ENCODE measurements at regions of chr9 and their contacts with region 1.

Region 1: GRCh38 chr9:105244003-105244733 is at the start of gene SLC44A1:
- DNase-seq: peak; percentile 92 to 94 (median 93)
- H3K4me3 ChIP-seq: peak within 1 kb of the TSS; percentile 18 to 71
- H3K4me3 Mint-ChIP-seq: peak within 1 kb of the TSS; percentile 89 to 95 (median 92)
- H3K27ac ChIP-seq: peak within 1 kb of the TSS; percentile 67
- H3K27ac Mint-ChIP-seq: peak within 1 kb of the TSS; percentile 89 to 96 (median 92)
- H3K4me1 ChIP-seq: peaks cover 20% of the 10 kb centered on the region
- H3K4me1 Mint-ChIP-seq: peaks cover 8 to 49% (median 20%) of the 10 kb centered on the region in 4 donors
- H3K27me3 ChIP-seq: no peaks in the 10 kb centered on the region
- H3K27me3 Mint-ChIP-seq: peaks cover 4% of the 10 kb centered on the region in 2 donors
- total RNA-seq, gene SLC44A1: 13.7 to 15.2 TPM

Region 2: DNA sequence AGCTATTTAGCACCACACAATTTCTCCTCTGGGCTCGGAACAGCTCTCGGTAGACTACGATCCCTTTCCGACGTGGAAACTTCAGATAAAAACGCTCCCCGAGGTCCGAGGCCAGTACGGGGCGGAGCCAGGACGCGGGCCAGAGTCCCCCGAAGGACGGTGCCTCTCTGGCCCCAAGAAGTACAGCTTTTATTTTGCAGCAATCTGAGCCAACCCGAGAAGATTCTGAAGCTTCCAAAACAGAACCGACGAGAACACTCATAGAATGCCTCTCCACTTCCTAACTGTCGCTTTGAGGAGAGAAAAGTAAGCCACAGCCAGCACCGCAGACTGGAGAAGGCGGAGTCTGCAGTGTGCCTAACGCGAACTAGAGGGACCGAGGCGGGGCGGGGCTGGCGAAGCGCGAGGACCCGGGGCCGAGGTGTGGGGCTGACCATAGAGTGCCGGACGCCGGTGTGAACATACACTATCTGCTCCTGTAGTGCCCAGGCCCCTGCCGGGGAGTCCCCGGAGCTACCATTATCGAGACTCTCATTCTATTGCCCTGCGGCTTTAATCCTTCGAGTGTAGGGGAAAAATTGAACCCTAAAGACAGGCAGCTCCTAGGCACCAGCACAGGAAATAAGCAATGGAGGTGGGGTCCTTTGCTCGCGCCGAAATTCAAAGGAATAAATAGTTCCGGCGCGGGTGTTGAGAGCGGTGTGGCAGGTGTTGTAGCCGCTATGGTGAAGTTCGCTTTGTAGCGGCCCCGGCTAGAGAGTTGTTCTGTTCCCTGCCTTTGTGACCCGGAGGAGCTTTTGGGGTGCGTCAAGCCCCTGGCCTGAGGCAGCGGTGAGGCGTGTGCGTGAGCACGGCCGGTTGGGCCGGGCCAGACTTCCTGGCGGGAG is 1150.3 kb before region 1 on chr9 and contains the start of gene SMC2:
- CTCF ChIA-PET with region 1: no interaction called
- POLR2A ChIA-PET with region 1: interaction called, 10 read pairs
- intact Hi-C with region 1: no loop called
- DNase-seq: peak; percentile 93 to 96 (median 95)
- H3K4me3 ChIP-seq: peak within 1 kb of the TSS; percentile 63 to 90
- H3K4me3 Mint-ChIP-seq: peak within 1 kb of the TSS; percentile 98 to 100 (median 99)
- H3K27ac ChIP-seq: peak within 1 kb of the TSS; percentile 79
- H3K27ac Mint-ChIP-seq: peak within 1 kb of the TSS; percentile 99 to 100 (median 99)
- H3K4me1 ChIP-seq: peaks cover 30% of the 10 kb centered on the region
- H3K4me1 Mint-ChIP-seq: peaks cover 26 to 46% (median 30%) of the 10 kb centered on the region in 4 donors
- H3K27me3 ChIP-seq: no peaks in the 10 kb centered on the region
- H3K27me3 Mint-ChIP-seq: peaks cover 0 to 3% of the 10 kb centered on the region in 2 donors
- total RNA-seq, gene SMC2: 9.7 to 10.4 TPM

Region 3: GRCh38 chr9:104765138-104765537 is 479.0 kb before region 1 on chr9:
- CTCF ChIA-PET with region 1: no interaction called
- POLR2A ChIA-PET with region 1: interaction called, 3 read pairs
- intact Hi-C with region 1: loop called (anchors 5 kb)
- DNase-seq: no peak
- H3K4me3 ChIP-seq: no peak overlapping the region
- H3K4me3 Mint-ChIP-seq: peak overlapping the region; percentile 91 to 97 (median 94)
- H3K27ac ChIP-seq: no peak overlapping the region
- H3K27ac Mint-ChIP-seq: peak overlapping the region in 2 of 7 donors; percentile 13 to 30
- H3K4me1 ChIP-seq: peaks cover 6% of the 10 kb centered on the region
- H3K4me1 Mint-ChIP-seq: peaks cover 5 to 9% (median 6%) of the 10 kb centered on the region in 4 donors
- H3K27me3 ChIP-seq: no peaks in the 10 kb centered on the region
- H3K27me3 Mint-ChIP-seq: no peaks in the 10 kb centered on the region

Region 4: GRCh38 chr9:104968025-104968982 is 275.9 kb before region 1 on chr9:
- CTCF ChIA-PET with region 1: no interaction called
- POLR2A ChIA-PET with region 1: interaction called, 4 read pairs
- intact Hi-C with region 1: loop called (anchors 1 kb)
- DNase-seq: peak; percentile 87 to 91 (median 89)
- H3K4me3 ChIP-seq: peak overlapping the region; percentile 78 to 88
- H3K4me3 Mint-ChIP-seq: peak overlapping the region; percentile 89 to 96 (median 94)
- H3K27ac ChIP-seq: peak overlapping the region; percentile 58
- H3K27ac Mint-ChIP-seq: peak overlapping the region; percentile 73 to 95 (median 90)
- H3K4me1 ChIP-seq: peaks cover 14% of the 10 kb centered on the region
- H3K4me1 Mint-ChIP-seq: peaks cover 2 to 17% (median 11%) of the 10 kb centered on the region in 4 donors
- H3K27me3 ChIP-seq: no peaks in the 10 kb centered on the region
- H3K27me3 Mint-ChIP-seq: peaks cover 6 to 13% of the 10 kb centered on the region in 2 donors

Region 5: DNA sequence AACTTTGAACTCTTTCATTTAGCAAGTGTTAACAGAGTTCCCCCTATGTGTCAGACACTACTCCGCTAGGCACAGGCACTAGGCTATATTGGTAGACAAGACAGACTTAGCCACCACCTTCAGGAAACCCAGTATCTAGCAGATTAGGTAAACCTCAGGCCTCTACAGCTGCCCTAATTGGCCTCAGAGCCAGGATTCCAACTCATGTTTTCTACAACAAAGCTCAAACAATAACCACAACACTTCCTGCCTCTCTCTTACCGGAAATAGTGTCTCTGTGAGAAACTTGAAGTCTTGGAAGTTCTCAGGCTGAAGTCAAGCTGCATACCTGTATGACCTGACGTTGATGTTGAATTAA is 116.3 kb before region 1 on chr9:
- CTCF ChIA-PET with region 1: no interaction called
- POLR2A ChIA-PET with region 1: interaction called, 13 read pairs
- intact Hi-C with region 1: loop called (anchors 2 kb)
- DNase-seq: peak; percentile 84 to 91 (median 89)
- H3K4me3 ChIP-seq: no peak overlapping the region
- H3K4me3 Mint-ChIP-seq: peak overlapping the region in 7 of 8 donors; percentile 33 to 81 (median 75)
- H3K27ac ChIP-seq: no peak overlapping the region
- H3K27ac Mint-ChIP-seq: peak overlapping the region; percentile 26 to 92 (median 83)
- H3K4me1 ChIP-seq: peaks cover 47% of the 10 kb centered on the region
- H3K4me1 Mint-ChIP-seq: peaks cover 40 to 63% (median 53%) of the 10 kb centered on the region in 4 donors
- H3K27me3 ChIP-seq: no peaks in the 10 kb centered on the region
- H3K27me3 Mint-ChIP-seq: peaks cover 0 to 1% of the 10 kb centered on the region in 2 donors

Region 6: GRCh38 chr9:105173306-105173705 is 70.9 kb before region 1 on chr9:
- CTCF ChIA-PET with region 1: no interaction called
- POLR2A ChIA-PET with region 1: no interaction called
- intact Hi-C with region 1: no loop called
- DNase-seq: no peak
- H3K4me3 ChIP-seq: no peak overlapping the region
- H3K4me3 Mint-ChIP-seq: no peak overlapping the region
- H3K27ac ChIP-seq: no peak overlapping the region
- H3K27ac Mint-ChIP-seq: no peak overlapping the region
- H3K4me1 ChIP-seq: no peaks in the 10 kb centered on the region
- H3K4me1 Mint-ChIP-seq: no peaks in the 10 kb centered on the region
- H3K27me3 ChIP-seq: no peaks in the 10 kb centered on the region
- H3K27me3 Mint-ChIP-seq: no peaks in the 10 kb centered on the region

Region 7: DNA sequence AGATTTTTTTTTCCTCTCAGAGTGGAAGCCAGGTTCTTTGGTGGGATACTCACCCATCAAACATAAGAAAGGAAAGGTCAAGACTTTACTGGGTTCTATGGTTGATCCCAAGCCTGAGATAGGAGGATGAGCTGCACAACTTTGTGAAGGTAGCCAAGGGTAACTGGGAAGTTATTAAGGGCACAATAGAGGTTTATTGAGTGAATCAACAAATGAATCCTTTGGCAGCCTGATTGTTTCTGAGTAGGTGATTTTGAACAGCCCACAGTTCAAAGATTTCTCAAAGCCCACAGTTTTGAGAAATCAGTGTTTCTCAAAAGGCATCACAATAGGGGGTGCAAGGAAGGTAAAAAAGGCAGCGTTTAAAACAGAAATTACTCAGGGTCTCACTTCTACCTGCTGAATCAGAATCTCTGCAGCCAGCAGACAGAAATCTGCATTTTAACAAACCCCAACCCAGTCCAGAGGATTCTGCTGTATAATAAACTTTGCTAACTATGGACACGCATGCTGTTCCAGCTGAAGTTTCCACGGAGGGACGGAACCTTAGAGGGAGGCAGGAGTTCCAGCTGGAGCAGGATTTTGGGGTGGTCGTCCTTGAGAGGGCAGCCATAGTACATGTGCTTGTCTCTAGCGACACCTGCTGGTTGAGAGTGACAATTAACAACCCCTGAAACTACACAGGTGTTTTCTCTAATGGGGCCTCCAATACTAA is 170.9 kb after region 1 on chr9:
- CTCF ChIA-PET with region 1: interaction called, 5 read pairs
- POLR2A ChIA-PET with region 1: no interaction called
- intact Hi-C with region 1: loop called (anchors 2 kb)
- DNase-seq: peak; percentile 51 to 64 (median 58)
- H3K4me3 ChIP-seq: no peak overlapping the region
- H3K4me3 Mint-ChIP-seq: no peak overlapping the region
- H3K27ac ChIP-seq: no peak overlapping the region
- H3K27ac Mint-ChIP-seq: no peak overlapping the region
- H3K4me1 ChIP-seq: no peaks in the 10 kb centered on the region
- H3K4me1 Mint-ChIP-seq: no peaks in the 10 kb centered on the region
- H3K27me3 ChIP-seq: peaks cover 6% of the 10 kb centered on the region
- H3K27me3 Mint-ChIP-seq: peaks cover 29 to 33% of the 10 kb centered on the region in 2 donors

Region 8: DNA sequence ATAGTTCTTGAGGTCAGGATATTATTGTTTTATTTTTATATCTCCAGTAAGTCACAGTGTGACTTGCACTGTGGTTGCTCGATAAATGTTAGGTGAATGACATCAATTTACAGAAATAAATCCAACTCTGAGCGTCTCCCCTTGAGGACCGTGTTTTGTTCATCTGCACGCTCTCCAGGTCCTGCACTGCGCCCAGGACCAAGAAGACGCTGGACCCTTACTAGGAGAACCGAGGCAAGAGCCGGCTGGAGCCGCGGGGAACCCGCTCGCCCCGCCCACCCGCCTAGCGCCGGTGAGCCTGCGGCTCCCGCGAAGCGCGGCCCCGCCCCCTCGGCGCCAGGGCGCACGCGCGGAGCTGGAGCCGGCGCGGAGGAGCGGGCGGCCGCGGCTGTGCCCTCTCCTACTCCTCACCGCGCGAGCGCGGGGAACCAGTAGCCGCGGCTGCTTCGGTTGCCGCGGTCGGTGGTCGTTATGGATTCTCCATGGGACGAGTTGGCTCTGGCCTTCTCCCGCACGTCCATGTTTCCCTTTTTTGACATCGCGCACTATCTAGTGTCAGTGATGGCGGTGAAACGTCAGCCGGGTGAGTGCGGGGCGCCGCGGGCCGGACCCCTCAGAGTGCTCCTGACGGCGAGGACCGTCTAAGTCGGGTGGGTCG is 450.2 kb after region 1 on chr9 and contains the start of gene TMEM38B:
- CTCF ChIA-PET with region 1: no interaction called
- POLR2A ChIA-PET with region 1: interaction called, 5 read pairs
- intact Hi-C with region 1: loop called (anchors 2 kb)
- DNase-seq: peak; percentile 77 to 86 (median 83)
- H3K4me3 ChIP-seq: peak within 1 kb of the TSS; percentile 59 to 79
- H3K4me3 Mint-ChIP-seq: peak within 1 kb of the TSS; percentile 87 to 96 (median 90)
- H3K27ac ChIP-seq: peak within 1 kb of the TSS; percentile 37
- H3K27ac Mint-ChIP-seq: peak within 1 kb of the TSS; percentile 63 to 85 (median 79)
- H3K4me1 ChIP-seq: peaks cover 20% of the 10 kb centered on the region
- H3K4me1 Mint-ChIP-seq: peaks cover 16 to 31% (median 23%) of the 10 kb centered on the region in 4 donors
- H3K27me3 ChIP-seq: peaks cover 11% of the 10 kb centered on the region
- H3K27me3 Mint-ChIP-seq: peaks cover 7 to 21% of the 10 kb centered on the region in 2 donors
- total RNA-seq, gene TMEM38B: 13.4 to 16.6 TPM

Measured in CD4-positive, alpha-beta memory T cell (primary cell).